Posterior cingulate gyrus (tissue), 11 donors: ENCODE measurements at regions of chr2 and their contacts with region 1.

Region 1: GRCh38 chr2:119311356-119311755 is 55.3 kb downstream of the C2orf76 start:
- DNase-seq: no peak

Region 2: GRCh38 chr2:119011162-119011909 is 300.0 kb before region 1 on chr2:
- intact Hi-C with region 1: loop called (anchors 5 kb)
- DNase-seq: peak; percentile 27 to 95 (median 62)